CD8-positive, alpha-beta T cell (primary cell): ENCODE measurements at regions of chr2 and their contacts with region 1.

Region 1: GRCh38 chr2:101205521-101205998 is 47.1 kb upstream of the CNOT11 start:
- DNase-seq: peak in 7 of 9 experiments; percentile 18 to 73 (median 48)
- ATAC-seq: peak; percentile 73
- H3K4me3 ChIP-seq: no peak overlapping the region
- H3K4me3 Mint-ChIP-seq: peak overlapping the region; percentile 70
- H3K27ac ChIP-seq: peak overlapping the region in 1 of 2 experiments; percentile 52
- H3K27ac Mint-ChIP-seq: peak overlapping the region; percentile 73
- H3K4me1 ChIP-seq: peaks cover 4% of the 10 kb centered on the region
- H3K4me1 Mint-ChIP-seq: peaks cover 12% of the 10 kb centered on the region
- H3K27me3 ChIP-seq: no peaks in the 10 kb centered on the region
- H3K27me3 Mint-ChIP-seq: no peaks in the 10 kb centered on the region
- CTCF ChIP-seq: peak; percentile 26

Region 2: GRCh38 chr2:101007415-101008345 is 197.9 kb before region 1 on chr2:
- CTCF ChIA-PET with region 1: interaction called, 46 read pairs
- POLR2A ChIA-PET with region 1: interaction called, 4 read pairs
- intact Hi-C with region 1: loop called (anchors 1 kb)
- DNase-seq: no peak
- ATAC-seq: no peak
- H3K4me3 ChIP-seq: no peak overlapping the region
- H3K4me3 Mint-ChIP-seq: no peak overlapping the region
- H3K27ac ChIP-seq: no peak overlapping the region
- H3K27ac Mint-ChIP-seq: peak overlapping the region; percentile 79
- H3K4me1 ChIP-seq: peaks cover 20% of the 10 kb centered on the region
- H3K4me1 Mint-ChIP-seq: peaks cover 57% of the 10 kb centered on the region
- H3K27me3 ChIP-seq: no peaks in the 10 kb centered on the region
- H3K27me3 Mint-ChIP-seq: no peaks in the 10 kb centered on the region
- CTCF ChIP-seq: no peak

Region 3: GRCh38 chr2:101219246-101219645 is 13.7 kb after region 1 on chr2:
- CTCF ChIA-PET with region 1: interaction called, 10 read pairs
- POLR2A ChIA-PET with region 1: no interaction called
- intact Hi-C with region 1: no loop called
- DNase-seq: no peak
- ATAC-seq: no peak
- H3K4me3 ChIP-seq: no peak overlapping the region
- H3K4me3 Mint-ChIP-seq: no peak overlapping the region
- H3K27ac ChIP-seq: no peak overlapping the region
- H3K27ac Mint-ChIP-seq: no peak overlapping the region
- H3K4me1 ChIP-seq: peaks cover 10% of the 10 kb centered on the region
- H3K4me1 Mint-ChIP-seq: peaks cover 9% of the 10 kb centered on the region
- H3K27me3 ChIP-seq: no peaks in the 10 kb centered on the region
- H3K27me3 Mint-ChIP-seq: no peaks in the 10 kb centered on the region
- CTCF ChIP-seq: no peak

Region 4: GRCh38 chr2:101823347-101823791 is 617.8 kb after region 1 on chr2:
- CTCF ChIA-PET with region 1: no interaction called
- POLR2A ChIA-PET with region 1: no interaction called
- intact Hi-C with region 1: no loop called
- DNase-seq: peak; percentile 39 to 84 (median 71)
- ATAC-seq: peak; percentile 90
- H3K4me3 ChIP-seq: no peak overlapping the region
- H3K4me3 Mint-ChIP-seq: peak overlapping the region; percentile 62
- H3K27ac ChIP-seq: peak overlapping the region in 1 of 2 experiments; percentile 52
- H3K27ac Mint-ChIP-seq: peak overlapping the region; percentile 91
- H3K4me1 ChIP-seq: peaks cover 51% of the 10 kb centered on the region
- H3K4me1 Mint-ChIP-seq: peaks cover 76% of the 10 kb centered on the region
- H3K27me3 ChIP-seq: no peaks in the 10 kb centered on the region
- H3K27me3 Mint-ChIP-seq: no peaks in the 10 kb centered on the region
- CTCF ChIP-seq: peak; percentile 82